ENCODE measurements at regions of chr17 and their contacts with region 1.

Region 1: DNA sequence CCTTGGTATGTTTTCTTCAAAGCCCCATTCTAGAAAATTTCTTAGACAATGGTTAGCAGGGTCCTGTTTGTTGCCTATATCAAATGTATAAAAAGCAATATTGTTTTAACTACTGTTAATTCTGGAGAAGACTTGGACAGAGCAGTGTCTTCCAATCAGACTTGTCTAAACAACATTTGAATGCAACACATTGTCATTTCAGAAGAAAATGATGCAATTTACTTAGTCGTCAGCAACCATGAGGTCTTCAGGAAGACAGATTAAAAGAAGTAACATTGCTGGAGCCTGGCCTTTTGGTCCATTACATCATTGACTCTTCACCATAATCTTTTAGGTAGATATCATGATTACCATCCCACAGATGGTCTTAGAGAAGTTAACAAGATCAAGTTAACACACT is 94.5 kb downstream of the ANKFN1 start:
- DNase-seq: no peak
- H3K4me3 ChIP-seq: no peak overlapping the region
- H3K27ac ChIP-seq: no peak overlapping the region
- H3K27me3 ChIP-seq: no peaks in the 10 kb centered on the region
- CTCF ChIP-seq: no peak

Region 2: DNA sequence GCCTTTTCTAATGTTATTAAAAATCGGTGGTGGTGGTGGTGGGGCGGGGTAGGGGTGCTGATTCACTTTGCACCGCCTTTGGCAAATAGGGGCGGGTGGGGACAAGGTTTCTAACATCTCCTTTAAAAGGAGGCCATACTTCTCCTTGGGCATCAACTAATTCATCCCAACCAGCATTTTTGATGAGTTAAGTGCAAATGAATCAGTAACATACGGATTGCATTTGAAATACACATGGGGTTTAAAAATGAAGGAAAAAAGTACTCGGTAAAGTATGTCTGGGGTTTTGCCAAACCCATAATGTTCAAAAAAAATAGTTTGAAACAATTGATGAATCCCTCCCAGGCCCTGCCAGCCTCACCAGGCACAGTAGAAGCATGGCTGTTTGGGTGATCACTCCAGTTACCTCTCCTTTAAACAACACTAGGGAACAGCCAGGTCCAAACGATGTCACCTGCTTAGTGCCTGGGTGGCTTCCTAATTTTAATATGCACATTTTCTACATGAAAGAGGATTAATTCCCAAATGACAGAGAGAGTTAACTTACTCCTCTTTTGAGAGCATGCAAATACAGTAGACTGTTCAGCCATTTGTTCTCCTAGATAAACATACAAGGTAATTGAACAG is 12.7 kb after region 1 on chr17:
- CTCF ChIA-PET with region 1: no interaction called
- POLR2A ChIA-PET with region 1: no interaction called
- DNase-seq: no peak
- H3K4me3 ChIP-seq: no peak overlapping the region
- H3K27ac ChIP-seq: no peak overlapping the region
- H3K27me3 ChIP-seq: no peaks in the 10 kb centered on the region
- CTCF ChIP-seq: no peak

Region 3: DNA sequence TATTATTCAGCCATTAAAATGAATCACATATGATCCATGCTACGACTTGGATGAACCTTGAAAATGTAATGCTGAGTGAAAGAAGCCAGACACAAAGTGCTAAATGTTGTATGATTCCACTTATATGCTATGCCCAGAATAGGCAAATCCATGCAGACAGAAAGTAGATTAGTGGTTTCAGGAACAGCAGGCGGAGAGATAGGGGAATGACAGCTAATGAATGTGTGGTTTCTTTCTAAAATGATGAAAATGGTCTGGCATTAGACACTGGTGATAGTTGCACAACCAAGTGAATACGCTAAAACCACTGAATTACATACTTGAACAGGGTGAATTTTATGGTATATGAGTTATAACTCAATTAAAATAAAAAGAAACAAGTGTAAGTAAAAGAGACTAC is 223.9 kb after region 1 on chr17:
- CTCF ChIA-PET with region 1: interaction called, 10 read pairs
- POLR2A ChIA-PET with region 1: no interaction called
- DNase-seq: no peak
- H3K4me3 ChIP-seq: no peak overlapping the region
- H3K27ac ChIP-seq: no peak overlapping the region
- H3K27me3 ChIP-seq: no peaks in the 10 kb centered on the region
- CTCF ChIP-seq: no peak